ENCODE measurements at regions of chr1 and their contacts with region 1.

Region 1: GRCh38 chr1:26321315-26322041 is 3.7 kb downstream of the CD52 start:
- DNase-seq: peak; percentile 85 to 98 (median 92)
- ATAC-seq: peak; percentile 93
- H3K4me3 ChIP-seq: peak overlapping the region; percentile 98
- H3K4me3 Mint-ChIP-seq: peak overlapping the region; percentile 79 to 99 (median 94)
- H3K27ac ChIP-seq: peak overlapping the region; percentile 77
- H3K27ac Mint-ChIP-seq: peak overlapping the region; percentile 87 to 99 (median 96)
- H3K4me1 ChIP-seq: peaks cover 42 to 45% of the 10 kb centered on the region in 2 donors
- H3K4me1 Mint-ChIP-seq: peaks cover 40 to 70% (median 48%) of the 10 kb centered on the region in 7 donors
- H3K27me3 ChIP-seq: no peaks in the 10 kb centered on the region
- H3K27me3 Mint-ChIP-seq: no peaks in the 10 kb centered on the region

Region 2: GRCh38 chr1:26169669-26170471 is 151.6 kb before region 1 on chr1 and contains the start of gene ZNF593:
- CTCF ChIA-PET with region 1: interaction called, 4 read pairs
- POLR2A ChIA-PET with region 1: interaction called, 5 read pairs
- intact Hi-C with region 1: loop called (anchors 1 to 2 kb)
- DNase-seq: peak; percentile 52 to 92 (median 69)
- ATAC-seq: peak; percentile 96
- H3K4me3 ChIP-seq: peak within 1 kb of the TSS; percentile 72
- H3K4me3 Mint-ChIP-seq: peak within 1 kb of the TSS; percentile 83 to 90 (median 88)
- H3K27ac ChIP-seq: peak within 1 kb of the TSS; percentile 86
- H3K27ac Mint-ChIP-seq: peak within 1 kb of the TSS; percentile 48 to 91 (median 77)
- H3K4me1 ChIP-seq: peaks cover 7 to 10% of the 10 kb centered on the region in 2 donors
- H3K4me1 Mint-ChIP-seq: peaks cover 0 to 33% (median 15%) of the 10 kb centered on the region in 7 donors
- H3K27me3 ChIP-seq: no peaks in the 10 kb centered on the region
- H3K27me3 Mint-ChIP-seq: peaks cover 0 to 21% (median 0%) of the 10 kb centered on the region in 5 donors
- total RNA-seq, gene ZNF593: 7.8 to 36.3 (median 9.6) TPM

Region 3: GRCh38 chr1:26300586-26301275 is 20.7 kb before region 1 on chr1:
- CTCF ChIA-PET with region 1: interaction called, 6 read pairs
- POLR2A ChIA-PET with region 1: interaction called, 286 read pairs
- intact Hi-C with region 1: no loop called
- DNase-seq: no peak
- ATAC-seq: no peak
- H3K4me3 ChIP-seq: no peak overlapping the region
- H3K4me3 Mint-ChIP-seq: no peak overlapping the region
- H3K27ac ChIP-seq: no peak overlapping the region
- H3K27ac Mint-ChIP-seq: peak overlapping the region in 4 of 9 donors; percentile 53 to 77 (median 61)
- H3K4me1 ChIP-seq: peaks cover 2 to 3% of the 10 kb centered on the region in 2 donors
- H3K4me1 Mint-ChIP-seq: peaks cover 14 to 46% (median 33%) of the 10 kb centered on the region in 7 donors
- H3K27me3 ChIP-seq: no peaks in the 10 kb centered on the region
- H3K27me3 Mint-ChIP-seq: no peaks in the 10 kb centered on the region

Region 4: DNA sequence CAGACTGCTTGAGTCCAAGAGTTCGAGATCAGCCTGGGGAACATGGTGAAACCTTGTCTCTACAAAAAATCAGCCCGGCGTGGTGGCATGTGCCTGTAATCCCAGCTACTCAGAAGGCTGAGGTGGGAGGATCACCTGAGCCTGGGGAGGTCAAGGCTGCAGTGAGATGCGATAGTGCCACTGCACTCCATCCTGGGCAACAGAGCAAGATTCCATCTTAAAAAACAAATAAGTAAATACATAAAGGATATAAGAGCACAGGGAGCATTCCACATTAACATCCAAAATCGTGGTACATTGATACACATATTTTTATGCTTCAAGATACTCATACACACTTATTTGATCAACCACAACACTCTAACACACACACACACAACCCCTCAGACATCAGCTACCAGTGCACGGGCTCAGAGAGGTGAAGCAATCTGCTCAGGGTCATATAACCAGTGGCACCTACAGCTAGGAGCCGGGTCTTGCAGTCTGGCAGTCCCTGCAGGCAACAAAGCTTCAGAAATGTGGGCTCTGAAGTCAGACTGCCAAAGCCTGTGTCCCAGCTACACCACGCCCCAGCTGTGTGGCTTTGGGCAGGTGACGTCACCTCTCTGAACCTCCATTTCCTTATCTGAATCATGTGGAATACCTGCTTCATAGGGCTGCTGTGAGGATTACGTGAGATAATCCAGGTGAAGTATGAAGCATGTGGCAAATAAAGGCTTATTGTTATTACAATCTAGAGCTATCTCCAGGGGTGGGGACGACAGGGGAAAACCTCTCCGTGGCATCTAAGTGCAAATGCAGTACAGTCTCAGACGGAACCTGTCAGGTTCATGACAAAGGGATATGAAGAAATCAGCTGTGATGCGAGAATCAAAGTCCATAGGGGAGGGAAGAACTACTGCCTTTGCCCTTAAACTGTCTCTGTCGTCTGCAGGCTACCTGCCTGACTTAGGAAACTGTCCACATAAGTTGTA is 37.2 kb after region 1 on chr1:
- CTCF ChIA-PET with region 1: interaction called, 26 read pairs
- POLR2A ChIA-PET with region 1: interaction called, 34 read pairs
- intact Hi-C with region 1: loop called (anchors 1 kb)
- DNase-seq: peak in 8 of 9 donors; percentile 58 to 88 (median 70)
- ATAC-seq: peak; percentile 84
- H3K4me3 ChIP-seq: peak overlapping the region; percentile 10
- H3K4me3 Mint-ChIP-seq: peak overlapping the region; percentile 43 to 83 (median 63)
- H3K27ac ChIP-seq: no peak overlapping the region
- H3K27ac Mint-ChIP-seq: peak overlapping the region in 8 of 9 donors; percentile 28 to 78 (median 46)
- H3K4me1 ChIP-seq: peaks cover 29 to 32% of the 10 kb centered on the region in 2 donors
- H3K4me1 Mint-ChIP-seq: peaks cover 25 to 47% (median 40%) of the 10 kb centered on the region in 7 donors
- H3K27me3 ChIP-seq: no peaks in the 10 kb centered on the region
- H3K27me3 Mint-ChIP-seq: peaks cover 7 to 29% (median 18%) of the 10 kb centered on the region in 5 donors

Region 5: GRCh38 chr1:26378088-26378878 is 56.8 kb after region 1 on chr1:
- CTCF ChIA-PET with region 1: interaction called, 11 read pairs
- POLR2A ChIA-PET with region 1: interaction called, 24 read pairs
- intact Hi-C with region 1: loop called in 1 of 2 experiments (anchors 5 kb)
- DNase-seq: peak; percentile 47 to 77 (median 70)
- ATAC-seq: peak; percentile 98
- H3K4me3 ChIP-seq: peak overlapping the region; percentile 35
- H3K4me3 Mint-ChIP-seq: peak overlapping the region; percentile 64 to 85 (median 74)
- H3K27ac ChIP-seq: peak overlapping the region; percentile 56
- H3K27ac Mint-ChIP-seq: peak overlapping the region; percentile 48 to 93 (median 92)
- H3K4me1 ChIP-seq: peaks cover 57 to 64% of the 10 kb centered on the region in 2 donors
- H3K4me1 Mint-ChIP-seq: peaks cover 57 to 74% (median 70%) of the 10 kb centered on the region in 7 donors
- H3K27me3 ChIP-seq: no peaks in the 10 kb centered on the region
- H3K27me3 Mint-ChIP-seq: no peaks in the 10 kb centered on the region

Region 6: GRCh38 chr1:26574719-26575251 is 253.3 kb after region 1 on chr1:
- CTCF ChIA-PET with region 1: no interaction called
- POLR2A ChIA-PET with region 1: no interaction called
- intact Hi-C with region 1: no loop called
- DNase-seq: no peak
- ATAC-seq: no peak
- H3K4me3 ChIP-seq: no peak overlapping the region
- H3K4me3 Mint-ChIP-seq: no peak overlapping the region
- H3K27ac ChIP-seq: no peak overlapping the region
- H3K27ac Mint-ChIP-seq: no peak overlapping the region
- H3K4me1 ChIP-seq: no peaks in the 10 kb centered on the region
- H3K4me1 Mint-ChIP-seq: peaks cover 4 to 27% (median 12%) of the 10 kb centered on the region in 7 donors
- H3K27me3 ChIP-seq: no peaks in the 10 kb centered on the region
- H3K27me3 Mint-ChIP-seq: no peaks in the 10 kb centered on the region